Activated CD4-positive, alpha-beta T cell treated with anti-CD3 and anti-CD28 coated beads, Interleukin-2, amount 10 ng/mL, durations not matched to agents 7 days and 5 days (primary cell): ENCODE measurements at regions of chr14 and their contacts with region 1.

Region 1: GRCh38 chr14:23588884-23589598 is 10.5 kb upstream of the JPH4 start:
- DNase-seq: peak; percentile 80
- H3K4me3 Mint-ChIP-seq: no peak overlapping the region
- H3K27ac Mint-ChIP-seq: no peak overlapping the region
- H3K4me1 Mint-ChIP-seq: peaks cover 6% of the 10 kb centered on the region
- H3K27me3 Mint-ChIP-seq: peaks cover 17% of the 10 kb centered on the region

Region 2: DNA sequence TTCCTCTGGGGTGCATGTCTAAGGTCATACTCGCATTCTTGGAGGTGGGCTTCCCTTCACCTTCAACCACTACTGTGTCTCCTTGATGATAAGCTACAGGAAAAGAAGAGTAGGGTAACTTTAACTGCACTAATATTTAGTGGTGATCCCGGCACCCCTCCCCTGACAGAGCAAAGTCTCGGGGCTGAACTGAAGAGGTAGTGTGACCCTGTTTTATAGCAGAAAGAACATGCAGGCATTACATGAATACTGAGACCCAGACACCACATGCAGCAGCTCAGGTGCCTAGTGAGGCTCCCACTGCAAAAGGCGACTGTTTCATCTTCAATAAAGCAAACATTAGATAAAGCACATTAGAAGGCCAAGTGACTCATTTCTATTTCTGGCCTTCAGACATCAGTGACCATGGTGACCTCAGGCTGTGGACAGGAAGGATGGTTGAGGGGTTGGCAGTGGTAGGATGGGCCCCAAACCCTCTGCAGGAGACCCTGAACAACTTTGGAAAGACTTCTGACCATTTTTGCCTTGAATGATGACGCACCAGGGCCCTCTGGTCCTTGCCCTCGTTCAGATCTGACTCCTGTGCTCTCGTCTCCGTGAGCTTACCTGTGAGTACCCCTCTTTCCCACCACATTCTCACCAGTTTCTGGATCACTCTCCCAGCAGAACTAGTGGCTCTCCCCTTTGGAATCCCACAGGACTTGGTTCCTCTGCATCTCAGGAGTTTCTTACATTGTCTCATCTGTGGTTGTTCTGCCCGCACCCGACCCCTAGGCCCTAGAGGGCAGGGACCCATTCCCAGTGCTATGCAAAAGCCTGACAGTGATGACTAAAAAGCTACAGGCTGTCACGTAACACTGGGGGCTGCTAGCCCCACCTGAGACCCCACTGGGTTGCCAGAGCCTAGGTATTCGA is 13.4 kb after region 1 on chr14:
- CTCF ChIA-PET with region 1: interaction called, 16 read pairs
- POLR2A ChIA-PET with region 1: no interaction called
- DNase-seq: no peak
- H3K4me3 Mint-ChIP-seq: no peak overlapping the region
- H3K27ac Mint-ChIP-seq: no peak overlapping the region
- H3K4me1 Mint-ChIP-seq: peaks cover 9% of the 10 kb centered on the region
- H3K27me3 Mint-ChIP-seq: no peaks in the 10 kb centered on the region

Region 3: DNA sequence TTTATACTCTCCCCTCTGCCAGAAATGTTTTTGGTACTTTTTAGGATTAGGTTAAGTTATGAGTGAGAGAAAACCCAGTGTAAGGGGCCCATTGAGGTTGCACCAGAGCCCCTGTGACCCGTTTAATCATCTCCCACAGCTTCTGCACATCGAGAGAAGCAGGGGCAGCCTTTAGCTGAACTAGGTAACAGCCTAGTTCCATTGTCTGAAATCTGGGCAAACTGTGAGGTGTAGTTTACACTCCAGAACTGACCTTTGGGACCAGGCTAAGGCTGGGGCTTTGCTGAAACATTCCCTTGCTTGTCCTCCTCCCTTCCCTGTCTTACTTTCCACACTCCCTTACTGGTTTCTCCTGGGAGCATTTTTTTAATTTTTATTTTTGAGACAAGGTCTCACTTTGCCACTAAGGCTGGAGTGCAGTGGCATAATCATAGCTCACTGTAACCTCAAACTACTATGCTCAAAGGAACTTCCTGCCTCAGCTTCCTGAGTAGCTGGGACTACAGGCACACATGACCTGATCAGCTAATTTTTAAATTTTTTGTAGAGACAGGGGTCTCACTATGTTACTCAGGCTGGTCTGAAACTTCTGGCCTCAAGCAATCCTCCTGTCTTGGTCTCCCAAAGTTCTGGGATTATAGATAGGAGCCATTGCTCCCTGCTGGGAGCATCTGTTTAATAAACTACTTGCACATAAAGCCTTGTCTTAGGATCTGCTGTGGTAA is 21.2 kb after region 1 on chr14:
- CTCF ChIA-PET with region 1: interaction called, 10 read pairs
- POLR2A ChIA-PET with region 1: no interaction called
- DNase-seq: peak; percentile 34
- H3K4me3 Mint-ChIP-seq: no peak overlapping the region
- H3K27ac Mint-ChIP-seq: peak overlapping the region; percentile 93
- H3K4me1 Mint-ChIP-seq: peaks cover 34% of the 10 kb centered on the region
- H3K27me3 Mint-ChIP-seq: peaks cover 1% of the 10 kb centered on the region

Region 4: GRCh38 chr14:23640524-23641141 is 51.6 kb after region 1 on chr14:
- CTCF ChIA-PET with region 1: no interaction called
- POLR2A ChIA-PET with region 1: no interaction called
- DNase-seq: no peak
- H3K4me3 Mint-ChIP-seq: no peak overlapping the region
- H3K27ac Mint-ChIP-seq: no peak overlapping the region
- H3K4me1 Mint-ChIP-seq: no peaks in the 10 kb centered on the region
- H3K27me3 Mint-ChIP-seq: no peaks in the 10 kb centered on the region

Region 5: DNA sequence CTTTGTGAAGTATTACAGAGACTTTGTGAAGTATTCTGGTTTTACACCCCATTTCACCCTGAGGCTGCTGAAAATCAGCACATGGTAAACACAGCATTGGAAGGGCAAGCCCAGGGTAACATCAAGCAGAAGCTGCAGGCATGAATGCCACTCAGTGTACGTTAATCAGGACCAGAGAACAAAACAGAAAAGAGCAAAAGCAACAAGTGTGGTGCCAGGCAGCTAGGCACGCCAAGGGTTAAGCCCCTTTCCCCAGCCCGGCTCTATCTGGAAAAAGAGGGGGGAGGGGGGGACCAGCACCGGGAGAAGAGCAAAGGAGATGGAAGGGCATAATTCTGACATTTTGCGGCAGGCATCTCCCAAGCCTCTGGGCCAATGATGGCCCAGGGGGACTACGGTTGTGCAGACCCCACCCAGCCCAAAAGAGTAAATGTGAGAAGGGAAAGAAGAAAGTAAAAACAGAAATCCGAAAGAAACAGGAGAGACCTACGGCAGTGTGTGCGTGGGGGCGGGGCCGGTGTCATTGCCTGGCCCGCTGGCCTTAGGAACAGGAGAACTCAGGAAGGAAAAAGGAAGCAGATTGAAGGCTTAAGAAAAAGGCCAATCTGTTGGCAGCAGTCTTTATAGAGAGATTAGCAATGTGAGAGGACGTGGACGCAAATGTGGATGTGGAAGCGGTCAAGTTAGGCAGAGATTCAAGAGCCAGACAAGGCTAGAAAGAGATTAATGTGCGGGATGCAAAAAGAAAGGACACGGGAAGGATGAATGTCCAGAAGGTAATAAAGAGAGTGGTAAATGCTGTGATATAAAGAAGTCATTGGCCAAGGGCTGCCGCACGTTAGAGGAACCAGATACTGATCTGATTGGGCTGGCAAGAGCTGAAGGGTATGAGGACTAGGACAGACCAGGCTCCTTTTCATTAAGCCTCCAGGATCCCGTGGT is 106.3 kb after region 1 on chr14:
- CTCF ChIA-PET with region 1: no interaction called
- POLR2A ChIA-PET with region 1: no interaction called
- DNase-seq: no peak
- H3K4me3 Mint-ChIP-seq: no peak overlapping the region
- H3K27ac Mint-ChIP-seq: no peak overlapping the region
- H3K4me1 Mint-ChIP-seq: no peaks in the 10 kb centered on the region
- H3K27me3 Mint-ChIP-seq: peaks cover 16% of the 10 kb centered on the region

Region 6: DNA sequence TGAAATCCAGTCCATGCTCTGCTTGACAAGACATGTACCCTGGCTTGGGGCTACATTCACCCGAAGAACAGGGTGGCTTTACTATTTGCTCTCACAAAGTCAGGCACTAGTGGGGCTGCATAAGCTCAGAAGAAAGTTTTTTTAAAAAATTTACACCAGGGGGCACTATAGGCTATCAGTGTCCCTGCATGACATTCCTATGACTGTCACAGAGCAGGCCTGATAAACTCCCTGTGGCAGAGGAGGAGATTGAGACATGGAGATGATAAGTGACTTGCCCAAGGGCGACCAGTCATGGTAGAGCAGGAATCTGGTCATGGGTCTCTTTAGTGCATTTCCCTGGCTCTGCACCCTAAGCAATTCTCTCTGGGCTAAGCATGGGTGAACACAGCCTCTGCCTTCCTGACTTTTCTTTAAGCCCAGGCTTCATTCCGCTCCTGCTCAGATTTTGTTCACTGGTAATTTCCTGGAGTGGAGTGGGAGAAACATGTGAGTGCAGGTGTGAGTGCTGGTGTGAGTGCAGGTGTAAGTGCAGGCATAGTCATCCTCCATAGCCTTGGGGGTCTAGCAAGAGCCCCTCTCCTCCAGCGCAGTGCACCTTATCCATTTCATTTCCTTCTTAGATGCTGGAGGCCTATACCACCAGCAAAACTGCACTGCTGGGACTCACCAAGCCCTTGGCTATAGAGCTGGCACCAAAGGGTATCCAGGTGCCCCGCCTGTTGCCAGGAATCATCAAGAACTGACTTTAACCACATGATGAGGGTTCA is 138.7 kb after region 1 on chr14:
- CTCF ChIA-PET with region 1: no interaction called
- POLR2A ChIA-PET with region 1: no interaction called
- DNase-seq: no peak
- H3K4me3 Mint-ChIP-seq: no peak overlapping the region
- H3K27ac Mint-ChIP-seq: no peak overlapping the region
- H3K4me1 Mint-ChIP-seq: no peaks in the 10 kb centered on the region
- H3K27me3 Mint-ChIP-seq: peaks cover 3% of the 10 kb centered on the region

Region 7: GRCh38 chr14:23929822-23930294 is 340.8 kb after region 1 on chr14:
- CTCF ChIA-PET with region 1: interaction called, 12 read pairs
- POLR2A ChIA-PET with region 1: no interaction called
- DNase-seq: peak; percentile 87
- H3K4me3 Mint-ChIP-seq: no peak overlapping the region
- H3K27ac Mint-ChIP-seq: no peak overlapping the region
- H3K4me1 Mint-ChIP-seq: no peaks in the 10 kb centered on the region
- H3K27me3 Mint-ChIP-seq: peaks cover 2% of the 10 kb centered on the region